ENCODE measurements at regions of chr20 and their contacts with region 1.

Region 1: GRCh38 chr20:50172347-50173013 is 18.1 kb upstream of the CEBPB start:
- DNase-seq: peak in 1 of 4 experiments; percentile 10
- ATAC-seq: no peak
- H3K4me3 ChIP-seq: no peak overlapping the region
- H3K27ac ChIP-seq: no peak overlapping the region
- H3K4me1 ChIP-seq: peaks cover 0 to 14% of the 10 kb centered on the region in 2 experiments; a peak in 3 of 5 replicates
- H3K27me3 ChIP-seq: no peaks in the 10 kb centered on the region
- CTCF ChIP-seq: no peak
- EP300 ChIP-seq: no peak
- POLR2A ChIP-seq: no peak
- RAD21 ChIP-seq: no peak

Region 2: GRCh38 chr20:50077818-50078604 is 94.5 kb before region 1 on chr20:
- CTCF ChIA-PET with region 1: no interaction called
- POLR2A ChIA-PET with region 1: no interaction called
- in situ Hi-C with region 1: loop called (anchors 5 kb)
- intact Hi-C with region 1: no loop called
- DNase-seq: no peak
- ATAC-seq: no peak
- H3K4me3 ChIP-seq: no peak overlapping the region
- H3K27ac ChIP-seq: no peak overlapping the region
- H3K4me1 ChIP-seq: peaks cover 0 to 10% of the 10 kb centered on the region in 2 experiments; a peak in 2 of 5 replicates
- H3K27me3 ChIP-seq: no peaks in the 10 kb centered on the region
- CTCF ChIP-seq: no peak
- EP300 ChIP-seq: no peak
- POLR2A ChIP-seq: no peak
- RAD21 ChIP-seq: no peak

Measured in K562 (cell line).